Mammary epithelial cell (primary cell): ENCODE measurements at regions of chr6 and their contacts with region 1.

Region 1: DNA sequence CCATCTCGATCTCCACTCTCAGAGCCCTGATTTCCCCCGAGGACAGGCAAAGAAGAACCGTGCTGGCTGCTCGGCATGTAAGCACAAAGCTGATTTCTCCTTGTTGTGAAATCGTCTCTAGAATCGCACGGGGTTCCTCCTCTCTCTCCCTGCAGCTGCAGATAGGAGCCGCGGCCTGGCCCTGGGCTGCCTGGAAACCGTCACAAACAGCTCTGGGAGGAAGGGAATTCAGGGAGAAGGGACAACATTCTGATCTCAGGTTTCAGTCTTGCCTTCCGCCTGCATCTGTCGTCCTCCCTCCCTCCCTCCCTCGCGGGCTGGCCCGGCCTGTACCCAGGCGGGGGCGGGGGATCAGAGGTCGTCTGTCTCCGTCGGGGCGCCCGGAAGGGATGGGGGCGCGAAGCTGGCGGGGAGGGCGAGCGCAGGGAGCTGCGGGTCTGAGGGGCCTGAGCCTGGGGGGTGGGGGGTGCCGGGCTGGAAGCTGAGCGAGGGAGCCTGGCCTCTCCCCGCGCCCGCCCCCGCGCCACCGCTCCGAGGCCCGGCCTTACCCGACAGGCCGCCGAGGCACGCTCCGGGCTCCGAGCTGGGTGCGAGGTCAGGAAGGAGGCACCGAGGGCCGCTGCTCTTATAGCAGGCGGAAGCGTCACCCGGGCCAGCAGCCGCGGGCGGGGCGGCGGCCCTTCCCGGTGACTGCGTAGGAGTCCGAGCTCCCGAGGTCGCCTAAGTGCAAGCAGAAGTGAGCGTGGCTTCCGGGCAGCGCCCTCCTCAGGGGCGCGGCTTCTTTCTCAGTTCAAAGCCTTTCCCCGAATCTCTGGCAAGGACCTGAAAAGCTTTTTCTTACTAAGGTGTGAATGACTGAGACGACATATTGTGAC is at the start of gene SERPINB1:
- DNase-seq: peak; percentile 86
- H3K4me3 ChIP-seq: peak within 1 kb of the TSS; percentile 47 to 59 (median 55)
- H3K27ac ChIP-seq: peak within 1 kb of the TSS; percentile 91
- H3K4me1 ChIP-seq: peaks cover 46% of the 10 kb centered on the region
- H3K27me3 ChIP-seq: no peaks in the 10 kb centered on the region
- CTCF ChIP-seq: no peak
- total RNA-seq, gene SERPINB1: 17.0 to 40.0 TPM

Region 2: GRCh38 chr6:2765166-2765895 is 76.2 kb before region 1 on chr6 and contains the start of gene WRNIP1:
- CTCF ChIA-PET with region 1: no interaction called
- dilution Hi-C with region 1: loop called (anchors 5 kb)
- in situ Hi-C with region 1: no loop called
- intact Hi-C with region 1: loop called (anchors 2 kb)
- DNase-seq: peak; percentile 99
- H3K4me3 ChIP-seq: peak within 1 kb of the TSS; percentile 68 to 88 (median 82)
- H3K27ac ChIP-seq: peak within 1 kb of the TSS; percentile 94
- H3K4me1 ChIP-seq: peaks cover 32% of the 10 kb centered on the region
- H3K27me3 ChIP-seq: no peaks in the 10 kb centered on the region
- CTCF ChIP-seq: peak; percentile 33 to 53
- total RNA-seq, gene WRNIP1: 43.3 to 46.0 TPM

Region 3: DNA sequence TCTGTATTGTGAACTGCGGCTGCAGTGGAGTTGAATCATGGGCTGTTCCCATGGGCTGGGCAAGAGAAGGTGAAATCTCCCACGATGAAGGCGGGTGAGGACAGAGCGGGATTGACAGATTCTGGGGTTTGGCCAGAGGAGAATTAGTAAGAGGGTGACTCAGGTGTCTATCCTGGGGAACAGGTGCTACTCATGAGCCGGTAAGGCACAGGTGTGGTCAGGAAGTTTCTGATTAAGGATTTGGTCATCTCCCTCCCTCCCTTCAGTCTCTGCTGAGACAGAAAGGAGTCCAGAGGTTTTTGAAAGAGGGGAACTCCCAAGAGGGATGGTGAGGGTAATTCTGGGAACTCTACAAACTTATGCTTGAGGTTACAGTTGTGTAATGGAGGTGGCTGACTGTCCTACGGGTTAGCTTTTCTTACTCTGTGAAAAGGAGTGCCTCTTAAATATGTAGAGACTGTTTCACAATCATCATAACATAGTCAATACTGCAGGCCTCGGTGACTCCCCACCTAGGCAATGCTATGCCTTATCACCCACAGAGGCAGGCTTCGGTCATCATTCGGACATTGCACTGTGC is 31.3 kb before region 1 on chr6:
- CTCF ChIA-PET with region 1: no interaction called
- dilution Hi-C with region 1: no loop called
- in situ Hi-C with region 1: no loop called
- intact Hi-C with region 1: loop called (anchors 1 kb)
- DNase-seq: peak; percentile 100
- H3K4me3 ChIP-seq: no peak overlapping the region
- H3K27ac ChIP-seq: peak overlapping the region; percentile 100
- H3K4me1 ChIP-seq: peaks cover 39% of the 10 kb centered on the region
- H3K27me3 ChIP-seq: no peaks in the 10 kb centered on the region
- CTCF ChIP-seq: peak in 1 of 2 donors; percentile 5

Region 4: DNA sequence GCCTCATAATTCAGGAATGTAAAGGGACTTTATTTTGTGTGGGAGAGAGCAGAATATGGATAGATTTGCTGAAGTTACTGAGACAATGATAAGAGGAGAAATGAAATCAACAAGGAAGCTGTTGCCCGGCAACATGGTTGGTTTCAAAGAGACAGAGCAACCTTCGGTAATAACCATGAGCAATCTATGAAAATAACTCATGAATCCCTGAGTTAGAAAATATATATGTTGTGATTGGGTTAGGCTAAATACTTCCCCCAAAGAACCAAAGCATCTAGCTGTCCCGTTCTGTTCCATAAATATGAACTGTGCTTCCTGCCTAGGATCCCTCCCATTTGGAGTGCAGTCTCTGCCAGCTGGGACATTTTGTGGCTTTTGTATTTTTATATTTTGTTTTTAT is 22.9 kb before region 1 on chr6:
- CTCF ChIA-PET with region 1: no interaction called
- dilution Hi-C with region 1: no loop called
- in situ Hi-C with region 1: no loop called
- intact Hi-C with region 1: loop called (anchors 1 kb)
- DNase-seq: peak; percentile 84
- H3K4me3 ChIP-seq: peak overlapping the region in 1 of 3 experiments; percentile 6
- H3K27ac ChIP-seq: peak overlapping the region; percentile 99
- H3K4me1 ChIP-seq: peaks cover 26% of the 10 kb centered on the region
- H3K27me3 ChIP-seq: no peaks in the 10 kb centered on the region
- CTCF ChIP-seq: no peak

Region 5: GRCh38 chr6:2931970-2932748 is 90.7 kb after region 1 on chr6:
- CTCF ChIA-PET with region 1: interaction called, 9 read pairs
- dilution Hi-C with region 1: no loop called
- in situ Hi-C with region 1: loop called in 1 of 2 experiments (anchors 10 kb)
- intact Hi-C with region 1: loop called (anchors 1 kb)
- DNase-seq: peak; percentile 73
- H3K4me3 ChIP-seq: no peak overlapping the region
- H3K27ac ChIP-seq: no peak overlapping the region
- H3K4me1 ChIP-seq: no peaks in the 10 kb centered on the region
- H3K27me3 ChIP-seq: peaks cover 3% of the 10 kb centered on the region
- CTCF ChIP-seq: peak; percentile 98 to 99

Region 6: GRCh38 chr6:3013479-3013878 is 172.0 kb after region 1 on chr6:
- CTCF ChIA-PET with region 1: no interaction called
- dilution Hi-C with region 1: no loop called
- in situ Hi-C with region 1: no loop called
- intact Hi-C with region 1: no loop called
- DNase-seq: peak; percentile 83
- H3K4me3 ChIP-seq: no peak overlapping the region
- H3K27ac ChIP-seq: no peak overlapping the region
- H3K4me1 ChIP-seq: peaks cover 13% of the 10 kb centered on the region
- H3K27me3 ChIP-seq: no peaks in the 10 kb centered on the region
- CTCF ChIP-seq: no peak

Region 7: DNA sequence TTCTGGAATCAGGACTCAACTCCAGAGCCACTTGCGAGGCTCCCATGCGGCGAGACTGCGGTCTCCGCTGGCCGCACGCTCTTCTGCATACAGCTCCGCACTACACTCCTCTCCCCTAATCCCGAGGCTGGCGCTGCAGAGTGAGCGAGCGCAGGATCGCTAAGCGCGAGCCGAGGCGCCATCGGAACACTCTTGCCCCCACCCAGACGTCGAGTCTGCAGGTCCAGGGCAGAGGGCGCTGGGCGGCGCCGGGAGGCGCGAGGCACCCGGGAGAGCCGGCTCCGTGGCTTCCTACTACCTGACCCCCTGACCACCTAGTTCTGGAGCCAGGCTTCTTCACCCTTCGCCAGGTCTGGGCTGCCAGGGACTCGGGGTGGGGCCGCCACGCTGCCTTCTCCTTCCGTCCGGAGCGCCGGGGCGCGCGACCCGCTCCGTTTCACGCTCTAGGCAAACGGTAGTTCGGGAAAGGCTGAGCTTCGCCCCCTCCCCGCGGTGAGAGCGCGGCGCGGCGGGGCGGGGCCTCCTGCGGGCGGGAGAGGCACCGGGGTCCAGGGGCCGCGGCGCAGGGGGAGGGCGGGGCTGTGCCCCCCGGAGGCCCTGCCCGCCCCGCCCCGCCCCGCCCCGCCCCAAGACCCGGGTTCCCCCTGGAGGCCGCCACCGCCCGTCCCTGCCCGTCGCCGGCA is 321.2 kb after region 1 on chr6:
- CTCF ChIA-PET with region 1: no interaction called
- dilution Hi-C with region 1: no loop called
- in situ Hi-C with region 1: no loop called
- intact Hi-C with region 1: loop called (anchors 5 kb)
- DNase-seq: peak; percentile 69
- H3K4me3 ChIP-seq: peak overlapping the region; percentile 54 to 74 (median 62)
- H3K27ac ChIP-seq: peak overlapping the region; percentile 18
- H3K4me1 ChIP-seq: peaks cover 13% of the 10 kb centered on the region
- H3K27me3 ChIP-seq: no peaks in the 10 kb centered on the region
- CTCF ChIP-seq: peak in 1 of 2 donors; percentile 30